IMR-90 (cell line): ENCODE measurements at regions of chr1 and their contacts with region 1.

Region 1: DNA sequence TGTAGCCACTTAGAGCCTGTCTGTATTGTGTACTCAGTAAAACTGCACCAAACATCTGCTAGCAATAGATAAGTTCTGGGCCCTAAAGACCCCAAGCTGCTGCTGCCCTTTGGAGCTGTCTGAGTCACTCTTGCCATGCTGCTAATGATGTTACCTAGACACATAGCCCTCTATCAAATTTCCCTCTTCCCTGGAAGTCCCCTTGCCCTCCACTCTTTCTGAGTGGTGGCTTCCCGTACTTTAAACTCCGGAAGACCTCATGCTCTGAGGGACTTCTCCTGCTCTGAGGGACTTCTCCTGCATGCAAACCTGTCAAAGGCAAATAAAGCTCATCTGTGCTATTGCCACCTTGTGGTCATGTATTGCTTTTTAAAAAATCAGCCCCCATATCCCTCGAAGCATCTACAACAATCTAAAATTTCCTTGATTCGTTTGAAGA is 34.0 kb downstream of the FH start:
- DNase-seq: peak; percentile 16
- ATAC-seq: peak; percentile 30; the same call in 1 of the 2 replicates
- H3K4me3 ChIP-seq: no peak overlapping the region
- H3K27ac ChIP-seq: no peak overlapping the region
- H3K4me1 ChIP-seq: peaks cover 6% of the 10 kb centered on the region
- H3K27me3 ChIP-seq: no peaks in the 10 kb centered on the region
- CTCF ChIP-seq: peak; percentile 33
- POLR2A ChIP-seq: no peak
- RAD21 ChIP-seq: peak; percentile 30; the same call in 1 of the 2 replicates

Region 2: GRCh38 chr1:240004086-240004749 is 1481.4 kb before region 1 on chr1:
- CTCF ChIA-PET with region 1: no interaction called
- POLR2A ChIA-PET with region 1: no interaction called
- dilution Hi-C with region 1: no loop called
- in situ Hi-C with region 1: loop called (anchors 25 kb)
- intact Hi-C with region 1: no loop called
- DNase-seq: peak; percentile 16
- ATAC-seq: peak; percentile 58
- H3K4me3 ChIP-seq: no peak overlapping the region
- H3K27ac ChIP-seq: no peak overlapping the region
- H3K4me1 ChIP-seq: no peaks in the 10 kb centered on the region
- H3K27me3 ChIP-seq: peaks cover 9% of the 10 kb centered on the region
- CTCF ChIP-seq: peak; percentile 61
- POLR2A ChIP-seq: no peak
- RAD21 ChIP-seq: peak; percentile 19; the same call in 1 of the 2 replicates

Region 3: DNA sequence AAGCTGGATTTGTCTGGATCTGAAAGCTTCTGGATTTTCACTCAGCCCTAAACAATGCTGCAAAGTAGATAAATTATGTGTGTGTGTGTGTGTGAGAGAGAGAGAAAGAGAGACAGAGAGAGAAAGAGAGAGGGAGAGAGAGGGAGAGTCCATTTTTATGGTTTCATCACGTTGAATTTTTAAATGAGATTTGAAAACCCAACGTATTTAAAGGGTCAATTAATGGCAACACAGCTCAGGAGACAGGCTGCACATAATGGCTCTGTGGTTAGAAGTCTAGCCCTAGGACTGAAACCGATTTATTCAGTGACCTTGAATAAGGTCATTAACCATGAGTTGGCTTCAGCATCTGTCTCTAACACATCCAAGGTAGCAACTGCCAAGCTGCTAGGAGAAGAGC is 1429.2 kb before region 1 on chr1:
- CTCF ChIA-PET with region 1: no interaction called
- POLR2A ChIA-PET with region 1: no interaction called
- dilution Hi-C with region 1: no loop called
- in situ Hi-C with region 1: no loop called
- intact Hi-C with region 1: no loop called
- DNase-seq: no peak
- ATAC-seq: no peak
- H3K4me3 ChIP-seq: no peak overlapping the region
- H3K27ac ChIP-seq: no peak overlapping the region
- H3K4me1 ChIP-seq: no peaks in the 10 kb centered on the region
- H3K27me3 ChIP-seq: no peaks in the 10 kb centered on the region; the same call in 1 of the 2 replicates
- CTCF ChIP-seq: no peak
- POLR2A ChIP-seq: no peak
- RAD21 ChIP-seq: no peak

Region 4: GRCh38 chr1:241356519-241357365 is 128.8 kb before region 1 on chr1 and contains the start of gene RGS7:
- CTCF ChIA-PET with region 1: no interaction called
- POLR2A ChIA-PET with region 1: no interaction called
- dilution Hi-C with region 1: no loop called
- in situ Hi-C with region 1: no loop called
- intact Hi-C with region 1: loop called (anchors 5 kb)
- DNase-seq: peak; percentile 41
- ATAC-seq: peak; percentile 91
- H3K4me3 ChIP-seq: peak within 1 kb of the TSS; percentile 59
- H3K27ac ChIP-seq: no peak within 1 kb of the TSS
- H3K4me1 ChIP-seq: no peaks in the 10 kb centered on the region
- H3K27me3 ChIP-seq: peaks cover 13% of the 10 kb centered on the region
- CTCF ChIP-seq: no peak
- POLR2A ChIP-seq: no peak
- RAD21 ChIP-seq: no peak
- total RNA-seq, gene RGS7: 0.72 and 0.83 TPM in 2 replicates

Region 5: GRCh38 chr1:241600496-241600901 is 114.9 kb after region 1 on chr1:
- CTCF ChIA-PET with region 1: no interaction called
- POLR2A ChIA-PET with region 1: no interaction called
- dilution Hi-C with region 1: no loop called
- in situ Hi-C with region 1: no loop called
- intact Hi-C with region 1: no loop called
- DNase-seq: peak; percentile 66
- ATAC-seq: peak; percentile 72
- H3K4me3 ChIP-seq: no peak overlapping the region
- H3K27ac ChIP-seq: no peak overlapping the region
- H3K4me1 ChIP-seq: peaks cover 3% of the 10 kb centered on the region; the same call in 1 of the 2 replicates
- H3K27me3 ChIP-seq: no peaks in the 10 kb centered on the region
- CTCF ChIP-seq: no peak
- POLR2A ChIP-seq: no peak
- RAD21 ChIP-seq: no peak